ENCODE measurements at regions of chrX and their contacts with region 1.

Region 1: DNA sequence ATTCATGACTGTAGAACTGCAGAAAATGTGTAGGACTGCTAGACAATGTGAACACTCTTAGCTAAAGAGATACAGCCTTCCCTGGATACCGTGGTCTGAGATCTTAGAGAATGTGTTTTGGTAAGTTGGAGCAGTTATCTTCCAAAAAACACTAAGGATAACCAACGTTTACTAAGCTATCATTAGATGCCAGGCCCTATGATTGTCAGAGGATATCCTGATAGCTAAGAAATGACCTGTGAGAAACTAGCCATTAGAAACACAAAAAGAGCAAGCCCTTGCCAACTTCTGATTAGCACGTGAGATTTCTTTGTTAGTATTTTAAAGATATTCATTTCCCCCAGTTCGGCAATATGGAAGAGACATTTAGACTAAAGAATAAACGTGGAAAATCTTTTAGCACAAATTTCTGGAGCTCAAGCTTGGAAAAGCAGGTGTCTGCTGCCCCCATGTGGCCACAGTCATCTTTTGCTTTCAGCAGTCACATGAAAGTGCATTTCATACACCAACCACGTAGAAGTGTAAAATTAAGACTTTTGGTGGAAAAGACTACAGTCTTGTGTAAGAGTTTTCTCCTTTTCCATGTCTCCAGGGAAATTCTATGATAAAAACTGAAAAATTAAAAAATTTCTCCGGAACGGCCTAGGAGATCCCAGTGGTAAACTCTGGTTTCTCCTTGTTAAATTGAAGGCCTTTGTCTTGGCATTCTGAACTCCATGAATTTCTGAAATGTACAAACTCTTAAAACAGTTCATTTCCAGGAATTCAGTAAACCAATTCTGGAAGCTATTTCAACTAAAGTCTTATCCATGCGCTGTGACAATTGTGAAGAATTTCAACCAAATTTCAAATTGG is 136.4 kb downstream of the ZNF674 start:
- DNase-seq: peak; percentile 22 to 88 (median 62)
- ATAC-seq: peak in 3 of 4 donors; percentile 72 to 75 (median 72)
- H3K4me3 ChIP-seq: no peak overlapping the region
- H3K27ac ChIP-seq: no peak overlapping the region
- H3K4me1 ChIP-seq: no peaks in the 10 kb centered on the region
- H3K27me3 ChIP-seq: no peaks in the 10 kb centered on the region
- CTCF ChIP-seq: peak; percentile 60 to 88 (median 83)

Region 2: DNA sequence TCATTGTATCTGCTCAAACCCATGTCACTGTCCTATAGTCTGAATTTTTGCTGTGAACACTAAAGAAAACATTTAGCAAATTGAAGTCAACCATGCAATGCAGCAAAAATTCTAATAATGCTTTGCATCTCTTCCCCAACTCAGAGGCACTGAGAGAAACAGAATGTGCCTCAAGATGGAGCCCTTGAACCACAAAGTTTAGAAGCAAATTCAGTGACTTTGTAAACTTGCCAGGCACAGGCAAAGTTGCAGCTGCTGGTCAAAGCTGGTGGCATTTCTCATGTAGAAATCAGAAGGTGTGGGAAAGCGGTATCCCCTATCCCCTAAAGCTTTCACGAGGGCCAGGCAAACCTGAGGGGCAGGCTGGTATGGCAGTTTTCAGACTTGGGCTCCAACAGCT is 1086.4 kb before region 1 on chrX:
- intact Hi-C with region 1: loop called in 1 of 3 experiments (anchors 10 kb)
- DNase-seq: peak in 4 of 6 donors; percentile 21 to 65 (median 28)
- ATAC-seq: peak; percentile 76 to 92 (median 84)
- H3K4me3 ChIP-seq: no peak overlapping the region
- H3K27ac ChIP-seq: no peak overlapping the region
- H3K4me1 ChIP-seq: no peaks in the 10 kb centered on the region
- H3K27me3 ChIP-seq: peaks cover 0 to 12% (median 3%) of the 10 kb centered on the region in 4 donors
- CTCF ChIP-seq: peak in 1 of 4 donors; percentile 24